Activated CD4-positive, alpha-beta memory T cell treated with anti-CD3 and anti-CD28 coated beads, Interleukin-2, amount 10 ng/mL, durations not matched to agents 7 days and 5 days (primary cell): ENCODE measurements at regions of chr14 and their contacts with region 1.

Region 1: DNA sequence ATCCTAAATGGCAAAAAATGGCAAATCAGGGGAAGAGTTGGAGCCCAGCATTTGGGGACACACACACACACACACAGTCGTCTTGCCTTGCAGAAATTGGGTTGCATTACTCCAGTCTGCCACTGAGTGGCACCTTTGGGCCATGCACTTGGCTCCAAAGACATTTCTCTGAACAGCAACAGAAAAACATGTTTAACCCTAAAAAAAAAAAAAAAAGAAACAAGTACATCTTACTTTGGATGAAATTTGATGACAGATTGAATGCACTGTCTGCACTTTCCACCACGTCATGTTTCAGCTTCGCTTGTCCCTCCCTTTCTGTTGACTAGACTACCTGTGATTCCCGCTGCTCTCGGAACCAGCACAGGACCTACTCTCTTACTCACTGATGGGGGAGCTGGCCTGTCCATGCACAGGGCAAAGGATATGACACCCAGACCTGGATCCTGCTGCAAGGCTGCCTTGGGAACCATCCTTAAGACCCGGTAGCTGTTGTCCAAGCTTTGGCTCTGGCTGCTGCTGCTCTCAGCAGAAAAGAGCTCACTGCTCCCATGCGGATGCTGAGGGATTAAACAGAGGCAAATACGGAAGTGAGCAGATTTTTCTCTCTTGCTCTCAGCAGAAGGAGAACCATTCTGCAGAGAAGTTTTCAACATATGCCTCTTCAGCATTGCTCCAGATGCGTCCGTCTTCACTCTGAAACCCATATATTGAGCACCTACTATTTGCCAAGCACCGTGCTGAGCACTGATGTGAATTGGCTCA is 376.8 kb downstream of the DPF3 start:
- DNase-seq: peak; percentile 87
- H3K4me3 Mint-ChIP-seq: no peak overlapping the region
- H3K27ac Mint-ChIP-seq: peak overlapping the region; percentile 98
- H3K4me1 Mint-ChIP-seq: peaks cover 78% of the 10 kb centered on the region
- H3K27me3 Mint-ChIP-seq: peaks cover 3% of the 10 kb centered on the region

Region 2: GRCh38 chr14:72476657-72477499 is 40.2 kb before region 1 on chr14:
- CTCF ChIA-PET with region 1: interaction called, 85 read pairs
- POLR2A ChIA-PET with region 1: interaction called, 33 read pairs
- DNase-seq: peak; percentile 89
- H3K4me3 Mint-ChIP-seq: peak overlapping the region; percentile 60
- H3K27ac Mint-ChIP-seq: peak overlapping the region; percentile 99
- H3K4me1 Mint-ChIP-seq: peaks cover 80% of the 10 kb centered on the region
- H3K27me3 Mint-ChIP-seq: no peaks in the 10 kb centered on the region

Region 3: GRCh38 chr14:72528059-72528862 is 11.1 kb after region 1 on chr14:
- CTCF ChIA-PET with region 1: interaction called, 18 read pairs
- POLR2A ChIA-PET with region 1: interaction called, 29 read pairs
- DNase-seq: no peak
- H3K4me3 Mint-ChIP-seq: no peak overlapping the region
- H3K27ac Mint-ChIP-seq: peak overlapping the region; percentile 4
- H3K4me1 Mint-ChIP-seq: peaks cover 81% of the 10 kb centered on the region
- H3K27me3 Mint-ChIP-seq: peaks cover 10% of the 10 kb centered on the region

Region 4: GRCh38 chr14:72594099-72594901 is 77.2 kb after region 1 on chr14:
- CTCF ChIA-PET with region 1: interaction called, 13 read pairs
- POLR2A ChIA-PET with region 1: interaction called, 42 read pairs
- DNase-seq: peak; percentile 82
- H3K4me3 Mint-ChIP-seq: peak overlapping the region; percentile 64
- H3K27ac Mint-ChIP-seq: peak overlapping the region; percentile 89
- H3K4me1 Mint-ChIP-seq: peaks cover 70% of the 10 kb centered on the region
- H3K27me3 Mint-ChIP-seq: peaks cover 47% of the 10 kb centered on the region

Region 5: DNA sequence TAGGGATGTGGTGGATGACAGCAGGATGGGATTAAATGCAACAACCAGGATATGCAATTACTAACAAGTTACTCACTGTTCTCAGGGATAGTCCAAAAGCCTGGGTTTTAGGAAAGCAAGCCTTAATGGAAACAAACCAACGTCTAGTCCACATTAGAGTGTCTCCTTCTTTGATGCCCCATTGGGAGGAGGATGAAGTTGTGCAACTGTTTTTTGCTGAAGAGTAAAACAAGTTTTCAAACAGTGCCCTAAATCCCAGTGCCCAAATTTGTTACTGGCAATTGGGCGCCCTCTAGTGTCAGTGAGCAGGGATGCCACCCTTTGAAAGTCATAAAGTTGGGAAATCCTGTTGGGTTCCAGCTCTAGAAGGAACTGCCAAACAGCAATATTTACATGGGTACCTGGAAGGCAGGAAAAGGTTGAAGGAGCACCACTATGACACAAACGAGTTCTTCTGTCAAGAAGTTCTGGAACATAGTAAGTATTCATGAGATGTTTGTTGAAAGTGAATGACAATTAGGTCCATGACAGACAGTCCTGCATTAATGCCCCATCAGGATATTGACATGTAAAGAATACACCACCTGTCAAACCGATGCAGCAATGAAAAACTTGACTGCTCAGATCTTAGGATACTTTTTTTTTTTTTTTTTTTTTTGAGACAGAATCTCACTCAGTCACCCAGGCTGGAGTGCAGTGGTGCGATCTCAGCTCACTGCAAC is 387.9 kb after region 1 on chr14:
- CTCF ChIA-PET with region 1: interaction called, 220 read pairs
- POLR2A ChIA-PET with region 1: interaction called, 25 read pairs
- DNase-seq: peak; percentile 75
- H3K4me3 Mint-ChIP-seq: no peak overlapping the region
- H3K27ac Mint-ChIP-seq: no peak overlapping the region
- H3K4me1 Mint-ChIP-seq: peaks cover 31% of the 10 kb centered on the region
- H3K27me3 Mint-ChIP-seq: peaks cover 25% of the 10 kb centered on the region

Region 6: GRCh38 chr14:73283608-73284379 is 766.7 kb after region 1 on chr14:
- CTCF ChIA-PET with region 1: no interaction called
- POLR2A ChIA-PET with region 1: no interaction called
- DNase-seq: no peak
- H3K4me3 Mint-ChIP-seq: no peak overlapping the region
- H3K27ac Mint-ChIP-seq: no peak overlapping the region
- H3K4me1 Mint-ChIP-seq: peaks cover 7% of the 10 kb centered on the region
- H3K27me3 Mint-ChIP-seq: no peaks in the 10 kb centered on the region